Activated CD8-positive, alpha-beta T cell treated with anti-CD3 and anti-CD28 coated beads for 36 hours (primary cell): ENCODE measurements at regions of chr2 and their contacts with region 1.

Region 1: DNA sequence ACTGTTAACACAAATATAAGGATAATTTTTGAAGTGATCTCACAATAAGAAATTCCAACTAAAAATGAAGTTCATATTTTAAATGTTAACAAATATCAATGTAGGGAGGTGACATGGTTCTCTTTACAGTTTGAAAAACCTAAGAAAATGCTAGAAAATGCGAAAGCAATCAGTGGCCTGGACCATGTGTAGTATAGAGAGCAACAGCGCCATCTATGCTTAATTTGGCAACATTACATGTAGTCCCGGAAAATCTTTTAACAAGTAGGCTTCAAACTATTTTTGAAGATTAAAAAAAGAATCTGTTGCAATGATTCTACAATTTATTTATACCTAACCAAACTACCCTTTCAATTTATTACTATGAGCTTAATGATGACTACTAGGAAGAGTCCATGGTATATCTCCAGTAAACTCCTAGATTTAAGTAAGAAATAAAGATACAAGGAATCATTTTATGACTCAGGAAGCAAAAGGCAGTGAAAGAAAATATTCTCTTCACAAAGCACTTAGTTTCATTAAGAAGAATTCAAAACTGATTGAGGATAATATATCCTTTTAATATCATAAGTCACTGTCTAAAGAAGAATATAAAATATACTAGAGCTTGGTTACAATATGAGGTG is 33.3 kb downstream of the NDUFA10 start:
- DNase-seq: peak; percentile 17
- ATAC-seq: peak; percentile 74
- H3K4me3 Mint-ChIP-seq: no peak overlapping the region
- H3K27ac Mint-ChIP-seq: no peak overlapping the region
- H3K4me1 Mint-ChIP-seq: no peaks in the 10 kb centered on the region
- H3K27me3 Mint-ChIP-seq: no peaks in the 10 kb centered on the region
- CTCF ChIP-seq: peak; percentile 91

Region 2: DNA sequence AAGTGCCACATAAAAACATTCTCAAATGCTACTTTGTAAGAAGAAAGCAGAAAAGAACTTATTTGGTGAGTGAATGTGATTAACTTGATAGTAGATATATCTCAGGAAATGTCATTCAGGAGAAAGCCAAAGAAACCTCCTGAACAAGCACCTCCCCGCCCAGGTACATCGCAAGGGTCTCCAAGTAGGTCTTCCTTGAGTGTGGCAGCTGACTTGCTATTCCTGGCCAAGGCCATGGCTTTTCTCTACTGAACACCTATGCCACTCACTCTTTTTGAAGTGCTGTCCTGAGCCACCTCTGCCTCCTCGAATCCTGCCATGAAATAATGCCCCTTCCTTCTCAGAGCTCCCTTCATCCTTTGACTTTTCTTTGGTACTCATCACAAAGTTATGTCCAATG is 20.7 kb before region 1 on chr2:
- CTCF ChIA-PET with region 1: interaction called, 10 read pairs
- POLR2A ChIA-PET with region 1: no interaction called
- intact Hi-C with region 1: no loop called
- DNase-seq: no peak
- ATAC-seq: no peak
- H3K4me3 Mint-ChIP-seq: no peak overlapping the region
- H3K27ac Mint-ChIP-seq: no peak overlapping the region
- H3K4me1 Mint-ChIP-seq: no peaks in the 10 kb centered on the region
- H3K27me3 Mint-ChIP-seq: no peaks in the 10 kb centered on the region
- CTCF ChIP-seq: no peak

Region 3: GRCh38 chr2:240013343-240013742 is 21.5 kb after region 1 on chr2:
- CTCF ChIA-PET with region 1: interaction called, 16 read pairs
- POLR2A ChIA-PET with region 1: interaction called, 3 read pairs
- intact Hi-C with region 1: no loop called
- DNase-seq: no peak
- ATAC-seq: no peak
- H3K4me3 Mint-ChIP-seq: no peak overlapping the region
- H3K27ac Mint-ChIP-seq: no peak overlapping the region
- H3K4me1 Mint-ChIP-seq: peaks cover 2% of the 10 kb centered on the region
- H3K27me3 Mint-ChIP-seq: no peaks in the 10 kb centered on the region
- CTCF ChIP-seq: no peak

Region 4: GRCh38 chr2:240021488-240022104 is 29.8 kb after region 1 on chr2:
- CTCF ChIA-PET with region 1: interaction called, 11 read pairs
- POLR2A ChIA-PET with region 1: interaction called, 3 read pairs
- intact Hi-C with region 1: no loop called
- DNase-seq: peak; percentile 83
- ATAC-seq: peak; percentile 47
- H3K4me3 Mint-ChIP-seq: no peak overlapping the region
- H3K27ac Mint-ChIP-seq: no peak overlapping the region
- H3K4me1 Mint-ChIP-seq: peaks cover 20% of the 10 kb centered on the region
- H3K27me3 Mint-ChIP-seq: no peaks in the 10 kb centered on the region
- CTCF ChIP-seq: peak; percentile 70